PC-3 (cell line): ENCODE measurements at regions of chr10 and their contacts with region 1.

Region 1: DNA sequence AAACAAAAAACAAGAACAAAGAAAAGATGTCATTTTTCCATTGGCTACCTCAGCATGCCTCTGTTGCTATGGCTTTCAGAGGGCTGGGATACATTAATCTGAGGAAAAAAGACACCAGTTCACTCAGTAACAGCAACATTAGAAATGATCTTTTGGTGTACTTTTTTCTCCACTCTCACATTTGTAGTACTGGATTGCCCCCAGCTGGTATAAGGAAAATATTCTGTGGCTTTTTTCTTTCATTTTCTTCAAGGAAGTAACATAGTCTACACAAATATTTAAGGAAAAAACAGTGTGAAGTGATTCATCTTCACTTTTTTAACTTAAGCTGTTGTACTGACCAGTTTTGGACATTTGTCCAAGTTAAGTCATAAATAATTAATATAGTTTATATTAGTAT is 482.3 kb downstream of the SORCS1 start:
- DNase-seq: peak; percentile 45
- ATAC-seq: no peak
- H3K4me3 ChIP-seq: no peak overlapping the region
- H3K27ac ChIP-seq: no peak overlapping the region
- H3K4me1 ChIP-seq: no peaks in the 10 kb centered on the region; the same call in 1 of the 2 replicates
- H3K27me3 ChIP-seq: peaks cover 23% of the 10 kb centered on the region; the same call in 1 of the 2 replicates
- CTCF ChIP-seq: peak; percentile 53

Region 2: GRCh38 chr10:106625751-106626150 is 56.4 kb before region 1 on chr10:
- CTCF ChIA-PET with region 1: no interaction called
- POLR2A ChIA-PET with region 1: no interaction called
- intact Hi-C with region 1: loop called (anchors 2 kb)
- DNase-seq: no peak
- ATAC-seq: no peak
- H3K4me3 ChIP-seq: no peak overlapping the region
- H3K27ac ChIP-seq: no peak overlapping the region
- H3K4me1 ChIP-seq: peaks cover 4% of the 10 kb centered on the region; the same call in 1 of the 2 replicates
- H3K27me3 ChIP-seq: no peaks in the 10 kb centered on the region
- CTCF ChIP-seq: no peak